CD4-positive, alpha-beta T cell (primary cell): ENCODE measurements at regions of chrX and their contacts with region 1.

Region 1: DNA sequence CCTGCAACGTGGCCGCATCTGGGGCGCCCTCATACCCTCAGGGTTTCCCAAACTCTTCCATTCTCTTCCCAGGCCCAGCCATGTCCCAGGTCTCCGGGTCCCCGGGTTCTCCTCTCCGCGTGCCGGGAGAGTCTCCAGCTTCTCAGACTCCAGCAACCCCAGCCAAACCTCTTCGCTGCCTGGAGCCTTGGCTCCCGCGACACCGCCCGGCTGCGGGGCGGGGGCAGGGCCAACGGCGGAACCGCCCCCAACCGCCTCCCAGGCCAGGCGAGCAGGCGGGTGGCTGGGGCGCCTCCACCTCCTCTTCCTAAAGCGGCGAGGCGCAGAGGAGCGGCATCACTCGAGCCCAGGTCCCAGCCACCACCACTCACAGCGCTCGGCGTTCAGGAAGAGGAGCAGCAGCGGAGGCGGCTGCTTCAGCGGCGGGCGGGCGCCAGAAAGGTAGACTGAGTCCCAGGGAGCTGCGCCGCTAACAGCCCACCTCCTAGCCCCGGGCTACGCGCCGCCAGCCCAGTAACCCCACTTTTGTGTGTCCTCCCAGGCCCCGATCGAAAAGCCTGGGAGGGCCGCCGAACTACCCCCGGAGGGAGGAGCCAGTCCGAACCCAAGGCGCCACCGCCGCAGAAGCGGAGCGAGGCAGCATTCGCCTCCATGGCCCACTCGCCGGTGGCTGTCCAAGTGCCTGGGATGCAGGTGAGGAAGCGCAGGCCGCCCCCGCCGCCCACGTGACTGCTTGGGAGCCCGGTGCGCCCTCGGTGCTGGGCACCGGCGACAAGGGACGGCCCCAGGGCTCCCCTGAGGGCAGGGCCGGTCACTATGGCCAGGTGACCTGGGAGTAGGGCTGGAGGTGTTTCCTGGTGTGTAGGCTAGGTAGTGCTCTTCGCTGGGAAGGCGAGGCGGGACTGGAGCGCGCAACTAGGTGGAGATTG is at the start of gene STK26:
- DNase-seq: peak; percentile 58 to 89 (median 73)
- ATAC-seq: peak; percentile 88
- H3K4me3 ChIP-seq: peak within 1 kb of the TSS; percentile 89
- H3K4me3 Mint-ChIP-seq: peak within 1 kb of the TSS; percentile 97
- H3K27ac ChIP-seq: peak within 1 kb of the TSS; percentile 62 to 81
- H3K27ac Mint-ChIP-seq: peak within 1 kb of the TSS; percentile 90
- H3K4me1 ChIP-seq: peaks cover 16% of the 10 kb centered on the region
- H3K4me1 Mint-ChIP-seq: peaks cover 35% of the 10 kb centered on the region
- H3K27me3 ChIP-seq: no peaks in the 10 kb centered on the region
- H3K27me3 Mint-ChIP-seq: no peaks in the 10 kb centered on the region
- CTCF ChIP-seq: no peak
- total RNA-seq, gene STK26: 25.2 to 27.9 TPM

Region 2: GRCh38 chrX:130788786-130789581 is 1234.2 kb before region 1 on chrX:
- CTCF ChIA-PET with region 1: no interaction called
- POLR2A ChIA-PET with region 1: no interaction called
- intact Hi-C with region 1: no loop called
- DNase-seq: no peak
- ATAC-seq: no peak
- H3K4me3 ChIP-seq: no peak overlapping the region
- H3K4me3 Mint-ChIP-seq: no peak overlapping the region
- H3K27ac ChIP-seq: no peak overlapping the region
- H3K27ac Mint-ChIP-seq: no peak overlapping the region
- H3K4me1 ChIP-seq: no peaks in the 10 kb centered on the region
- H3K4me1 Mint-ChIP-seq: no peaks in the 10 kb centered on the region
- H3K27me3 ChIP-seq: no peaks in the 10 kb centered on the region
- H3K27me3 Mint-ChIP-seq: no peaks in the 10 kb centered on the region
- CTCF ChIP-seq: no peak

Region 3: GRCh38 chrX:131987252-131987651 is 36.0 kb before region 1 on chrX:
- CTCF ChIA-PET with region 1: no interaction called
- POLR2A ChIA-PET with region 1: interaction called, 43 read pairs
- intact Hi-C with region 1: loop called (anchors 2 to 5 kb)
- DNase-seq: peak in 8 of 14 experiments; percentile 1 to 83 (median 28)
- ATAC-seq: peak; percentile 93
- H3K4me3 ChIP-seq: peak overlapping the region; percentile 14
- H3K4me3 Mint-ChIP-seq: peak overlapping the region; percentile 80
- H3K27ac ChIP-seq: peak overlapping the region; percentile 59 to 70
- H3K27ac Mint-ChIP-seq: peak overlapping the region; percentile 97
- H3K4me1 ChIP-seq: peaks cover 47% of the 10 kb centered on the region
- H3K4me1 Mint-ChIP-seq: peaks cover 63% of the 10 kb centered on the region
- H3K27me3 ChIP-seq: no peaks in the 10 kb centered on the region
- H3K27me3 Mint-ChIP-seq: no peaks in the 10 kb centered on the region
- CTCF ChIP-seq: no peak

Region 4: DNA sequence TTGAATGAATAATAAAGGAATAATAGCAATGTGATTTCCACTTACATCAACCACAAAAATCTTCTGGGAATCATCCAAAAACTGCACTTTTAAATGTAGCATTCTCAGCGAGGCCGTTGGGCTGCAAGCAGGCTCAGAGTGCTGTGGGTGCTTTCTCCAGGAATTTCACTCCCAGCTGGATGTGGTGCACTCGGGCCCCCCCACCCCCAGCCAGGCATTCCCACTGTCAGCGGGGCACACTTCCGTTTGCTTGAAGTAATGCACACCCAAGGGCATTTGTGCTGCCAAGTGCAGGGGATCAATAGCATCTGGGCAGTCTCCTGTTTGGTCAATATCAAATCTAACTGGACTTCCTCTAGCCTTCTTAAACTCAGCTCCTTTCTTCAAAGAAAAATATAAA is 104.5 kb after region 1 on chrX and contains the start of gene FRMD7:
- CTCF ChIA-PET with region 1: no interaction called
- POLR2A ChIA-PET with region 1: no interaction called
- intact Hi-C with region 1: no loop called
- DNase-seq: no peak
- ATAC-seq: no peak
- H3K4me3 ChIP-seq: no peak within 1 kb of the TSS
- H3K4me3 Mint-ChIP-seq: no peak within 1 kb of the TSS
- H3K27ac ChIP-seq: no peak within 1 kb of the TSS
- H3K27ac Mint-ChIP-seq: no peak within 1 kb of the TSS
- H3K4me1 ChIP-seq: no peaks in the 10 kb centered on the region
- H3K4me1 Mint-ChIP-seq: no peaks in the 10 kb centered on the region
- H3K27me3 ChIP-seq: peaks cover 0 to 4% of the 10 kb centered on the region in 2 experiments
- H3K27me3 Mint-ChIP-seq: peaks cover 7% of the 10 kb centered on the region
- CTCF ChIP-seq: no peak
- total RNA-seq, gene FRMD7: not detected

Region 5: DNA sequence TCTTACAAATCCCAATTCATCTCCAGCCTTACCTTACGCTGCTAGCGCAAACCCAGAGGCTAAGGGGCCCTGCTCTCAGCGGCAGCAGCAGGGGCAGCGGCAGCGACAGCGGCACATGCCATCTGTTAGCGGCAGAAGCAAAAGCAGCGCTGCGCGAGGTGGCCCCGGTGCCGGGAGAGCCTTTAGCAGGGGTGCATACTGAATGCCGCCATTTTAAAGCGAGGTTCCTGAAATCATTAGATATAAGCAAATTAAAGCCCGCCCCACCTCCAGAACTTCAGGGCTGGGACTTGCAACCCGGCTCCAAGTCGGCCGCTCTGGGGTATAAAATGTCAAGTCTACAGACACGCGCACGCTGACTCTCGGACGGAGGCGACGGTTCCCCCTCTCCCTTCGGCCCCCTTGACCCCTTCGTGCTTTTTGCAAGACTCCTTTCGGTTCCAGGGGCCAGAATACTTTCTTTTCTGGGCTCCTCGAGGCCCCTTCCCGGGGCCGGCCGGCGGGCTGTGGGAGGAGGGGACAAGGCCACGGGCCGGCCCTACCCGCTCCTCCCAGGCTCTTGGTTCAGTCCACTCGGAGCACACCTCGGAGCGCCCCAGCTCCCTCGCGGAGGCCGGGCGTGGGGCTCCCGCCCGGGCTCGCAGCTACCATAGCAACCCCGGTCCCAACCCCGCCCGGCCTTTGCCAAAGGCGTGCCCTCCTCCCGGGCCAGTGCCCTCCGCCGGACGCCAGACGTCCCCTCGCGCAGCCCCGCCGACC is 465.8 kb after region 1 on chrX and contains the start of gene MBNL3:
- CTCF ChIA-PET with region 1: no interaction called
- POLR2A ChIA-PET with region 1: interaction called, 4 read pairs
- intact Hi-C with region 1: loop called in 1 of 2 experiments (anchors 10 kb)
- DNase-seq: peak; percentile 54 to 87 (median 67)
- ATAC-seq: peak; percentile 75
- H3K4me3 ChIP-seq: peak within 1 kb of the TSS; percentile 80
- H3K4me3 Mint-ChIP-seq: peak within 1 kb of the TSS; percentile 99
- H3K27ac ChIP-seq: peak within 1 kb of the TSS; percentile 75 to 80
- H3K27ac Mint-ChIP-seq: peak within 1 kb of the TSS; percentile 98
- H3K4me1 ChIP-seq: peaks cover 18% of the 10 kb centered on the region
- H3K4me1 Mint-ChIP-seq: peaks cover 61% of the 10 kb centered on the region
- H3K27me3 ChIP-seq: no peaks in the 10 kb centered on the region
- H3K27me3 Mint-ChIP-seq: no peaks in the 10 kb centered on the region
- CTCF ChIP-seq: no peak
- total RNA-seq, gene MBNL3: 19.0 to 19.4 TPM